Heart left ventricle (tissue), 16 donors: ENCODE measurements at regions of chr6 and their contacts with region 1.

Region 1: GRCh38 chr6:89080542-89081422 is at the start of gene PNRC1:
- DNase-seq: peak; percentile 100
- ATAC-seq: peak; percentile 88 to 92 (median 92)
- H3K4me3 ChIP-seq: peak within 1 kb of the TSS; percentile 68 to 100 (median 95)
- H3K27ac ChIP-seq: peak within 1 kb of the TSS; percentile 95 to 100 (median 100)
- H3K4me1 ChIP-seq: peaks cover 0 to 48% (median 29%) of the 10 kb centered on the region in 12 donors
- H3K27me3 ChIP-seq: no peaks in the 10 kb centered on the region
- CTCF ChIP-seq: peak in 1 of 12 donors; percentile 8
- POLR2A ChIP-seq: peak; percentile 95 to 100
- total RNA-seq, gene PNRC1: 141 to 280 (median 213) TPM

Region 2: DNA sequence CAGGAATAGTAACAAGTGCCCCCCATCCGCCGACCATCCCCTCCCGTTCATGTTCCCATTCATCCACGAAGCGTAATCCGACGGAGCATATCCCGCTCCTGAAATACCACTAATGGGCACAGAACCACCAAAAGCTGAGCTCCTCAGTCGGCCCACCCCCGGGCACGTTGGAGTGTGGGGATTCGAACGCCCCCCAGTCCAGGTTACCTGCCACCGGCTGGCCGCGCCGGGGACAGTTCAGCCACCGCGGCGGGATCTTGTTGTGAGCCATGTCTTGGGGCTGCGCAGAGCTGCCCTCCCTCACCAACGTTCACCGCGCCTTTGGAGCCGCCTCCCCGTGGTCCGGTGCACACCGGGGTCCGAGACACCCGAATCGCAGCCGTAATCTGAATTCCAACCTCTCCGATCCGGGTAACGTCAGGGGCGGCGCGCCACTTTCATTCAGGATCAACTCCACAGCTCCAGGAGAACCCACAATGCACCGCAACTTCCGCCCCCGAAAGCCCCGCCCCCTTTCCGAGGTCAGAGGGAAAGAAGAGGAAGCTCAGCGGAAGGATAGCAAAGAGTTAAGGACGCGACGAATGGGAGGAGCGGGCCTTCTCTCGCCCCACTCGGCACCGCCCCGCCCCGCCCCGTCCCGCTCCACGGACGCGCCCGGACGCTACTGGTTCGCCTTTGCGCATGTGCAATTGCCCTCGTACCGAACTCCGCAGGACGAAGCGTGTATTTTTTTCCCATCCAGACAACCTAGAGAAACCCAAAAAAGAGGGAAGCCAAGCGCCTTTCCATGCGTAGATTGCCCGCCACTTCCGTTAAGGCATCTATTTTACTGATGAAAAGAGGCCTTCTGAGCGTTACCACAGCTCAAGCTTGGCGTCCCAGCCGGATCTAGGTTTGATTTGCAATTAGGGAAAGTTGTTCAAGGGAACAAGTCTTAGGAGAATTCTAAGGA is 117.4 kb before region 1 on chr6 and contains the start of gene RNGTT:
- intact Hi-C with region 1: loop called in 1 of 10 experiments (anchors 1 kb)
- DNase-seq: peak; percentile 99
- ATAC-seq: peak; percentile 100
- H3K4me3 ChIP-seq: peak within 1 kb of the TSS; percentile 67 to 99 (median 96)
- H3K27ac ChIP-seq: peak within 1 kb of the TSS in 11 of 12 donors; percentile 67 to 92 (median 87)
- H3K4me1 ChIP-seq: peaks cover 0 to 23% (median 16%) of the 10 kb centered on the region in 12 donors
- H3K27me3 ChIP-seq: no peaks in the 10 kb centered on the region
- CTCF ChIP-seq: peak in 2 of 12 donors; percentile 9 to 16
- POLR2A ChIP-seq: peak in 1 of 2 donors; percentile 69
- total RNA-seq, gene RNGTT: 5.7 to 11.6 (median 9.1) TPM

Region 3: GRCh38 chr6:88989215-88989614 is 91.6 kb before region 1 on chr6:
- intact Hi-C with region 1: loop called in 8 of 10 experiments (anchors 2 to 5 kb)
- DNase-seq: no peak
- ATAC-seq: no peak
- H3K4me3 ChIP-seq: no peak overlapping the region
- H3K27ac ChIP-seq: no peak overlapping the region
- H3K4me1 ChIP-seq: peaks cover 0 to 8% (median 0%) of the 10 kb centered on the region in 12 donors
- H3K27me3 ChIP-seq: no peaks in the 10 kb centered on the region
- CTCF ChIP-seq: no peak
- POLR2A ChIP-seq: no peak

Region 4: DNA sequence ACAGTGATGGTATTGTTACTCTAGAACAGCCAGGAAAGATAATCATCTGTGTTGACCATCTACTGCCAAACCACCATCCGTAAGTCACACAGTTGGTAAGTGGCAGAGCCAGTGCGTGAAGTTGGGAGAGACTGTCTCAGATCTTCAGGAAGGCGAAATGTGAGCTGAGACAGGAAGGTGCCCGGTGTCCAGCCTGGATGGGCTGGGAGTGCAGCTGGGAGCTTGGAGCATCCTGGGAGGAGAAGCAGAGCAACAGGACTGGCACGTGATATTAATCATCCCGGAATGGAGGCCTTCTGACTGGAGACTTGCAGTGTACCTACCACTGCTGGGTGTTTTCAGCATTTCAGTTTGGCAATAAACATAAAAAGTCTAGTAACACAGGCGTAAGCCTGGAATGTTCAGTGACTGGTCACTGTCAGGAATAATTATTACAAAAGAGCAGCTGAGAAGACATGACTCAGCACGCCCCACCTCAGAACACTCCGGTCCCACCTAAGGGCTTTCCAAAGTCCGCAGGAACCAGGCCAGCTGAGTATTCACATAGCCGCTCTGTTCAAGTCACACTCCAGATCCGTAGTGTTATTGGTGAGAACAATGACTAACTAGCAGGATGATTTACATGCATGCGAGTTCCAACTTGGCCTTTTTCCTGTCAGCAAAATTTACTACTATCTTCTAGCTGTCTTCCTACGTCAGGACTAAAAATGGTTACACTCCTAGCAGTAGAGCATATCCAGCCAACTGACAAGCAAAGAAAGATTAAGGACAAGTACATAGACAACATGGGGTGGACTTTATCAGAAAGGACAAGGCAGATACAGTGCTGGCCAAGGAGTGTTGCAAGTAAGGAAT is 45.3 kb before region 1 on chr6:
- intact Hi-C with region 1: loop called (anchors 1 to 5 kb)
- DNase-seq: peak; percentile 66 to 95 (median 71)
- ATAC-seq: peak; percentile 92 to 96 (median 94)
- H3K4me3 ChIP-seq: peak overlapping the region in 10 of 12 donors; percentile 0 to 29 (median 14)
- H3K27ac ChIP-seq: peak overlapping the region; percentile 62 to 97 (median 82)
- H3K4me1 ChIP-seq: peaks cover 4 to 54% (median 25%) of the 10 kb centered on the region in 12 donors
- H3K27me3 ChIP-seq: no peaks in the 10 kb centered on the region
- CTCF ChIP-seq: no peak
- POLR2A ChIP-seq: no peak

Region 5: DNA sequence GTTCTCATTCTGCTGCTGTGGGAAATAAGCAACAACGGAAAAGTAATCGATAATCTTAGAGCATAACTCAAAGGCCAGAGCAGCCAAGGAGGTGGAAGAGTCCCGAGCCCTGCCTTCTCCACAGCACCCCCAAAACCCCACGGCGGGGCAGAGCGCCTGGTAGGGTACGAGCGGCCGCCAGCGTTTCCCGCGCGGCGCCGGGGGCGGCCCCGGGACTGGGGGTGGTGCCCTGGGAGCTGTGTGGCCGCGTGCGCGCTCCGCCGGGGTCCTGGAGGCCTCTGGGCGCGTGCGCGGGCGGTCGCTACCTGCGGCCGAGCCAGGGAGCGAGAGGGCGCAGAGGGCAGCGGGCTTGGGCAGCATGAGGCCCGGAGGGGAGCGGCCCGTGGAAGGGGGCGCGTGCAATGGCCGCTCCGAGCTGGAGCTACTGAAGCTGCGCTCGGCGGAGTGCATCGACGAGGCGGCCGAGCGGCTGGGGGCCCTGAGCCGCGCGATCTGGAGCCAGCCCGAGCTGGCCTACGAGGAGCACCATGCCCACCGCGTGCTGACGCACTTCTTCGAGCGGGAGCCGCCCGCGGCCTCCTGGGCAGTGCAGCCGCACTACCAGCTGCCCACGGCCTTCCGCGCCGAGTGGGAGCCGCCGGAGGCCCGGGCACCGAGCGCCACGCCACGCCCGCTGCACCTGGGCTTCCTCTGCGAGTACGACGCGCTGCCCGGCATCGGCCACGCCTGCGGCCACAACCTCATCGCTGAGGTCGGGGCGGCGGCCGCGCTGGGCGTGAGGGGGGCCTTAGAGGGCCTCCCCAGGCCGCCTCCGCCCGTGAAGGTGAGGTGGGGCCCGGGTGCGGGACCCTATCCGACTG is 65.2 kb after region 1 on chr6 and contains the start of gene PM20D2:
- intact Hi-C with region 1: loop called in 5 of 10 experiments (anchors 5 to 10 kb)
- DNase-seq: peak; percentile 70 to 77 (median 74)
- ATAC-seq: peak; percentile 92 to 98 (median 95)
- H3K4me3 ChIP-seq: peak within 1 kb of the TSS; percentile 61 to 92 (median 85)
- H3K27ac ChIP-seq: peak within 1 kb of the TSS; percentile 82 to 98 (median 90)
- H3K4me1 ChIP-seq: peaks cover 0 to 25% (median 7%) of the 10 kb centered on the region in 12 donors
- H3K27me3 ChIP-seq: no peaks in the 10 kb centered on the region
- CTCF ChIP-seq: no peak
- POLR2A ChIP-seq: peak; percentile 2 to 64
- total RNA-seq, gene PM20D2: 6.0 to 22.9 (median 10.4) TPM

Region 6: DNA sequence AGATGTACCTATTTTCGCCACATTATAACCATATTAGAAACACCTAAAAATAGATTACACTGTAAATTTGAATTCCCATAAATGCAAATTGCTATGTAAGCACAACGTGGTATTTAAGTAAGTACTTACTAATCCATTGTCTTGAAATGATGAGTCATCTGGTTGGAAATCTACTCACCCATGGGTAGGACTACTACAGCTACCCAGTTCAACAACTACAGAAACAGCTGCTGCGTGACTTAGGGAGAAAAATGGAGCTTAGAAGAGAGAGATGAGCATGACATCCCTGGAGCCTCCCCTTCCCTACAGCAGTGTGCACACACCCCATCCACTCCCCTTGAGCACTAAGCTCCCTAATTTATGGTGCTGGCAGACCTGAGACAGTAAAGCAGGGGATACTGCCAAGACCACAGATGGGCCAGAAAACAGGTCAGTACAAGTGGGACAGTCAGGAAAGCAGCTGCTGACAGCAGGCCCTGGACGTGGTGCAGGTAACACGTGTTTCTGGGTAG is 304.4 kb after region 1 on chr6:
- intact Hi-C with region 1: no loop called
- DNase-seq: no peak
- ATAC-seq: peak; percentile 17 to 65 (median 59)
- H3K4me3 ChIP-seq: no peak overlapping the region
- H3K27ac ChIP-seq: peak overlapping the region in 1 of 12 donors; percentile 4
- H3K4me1 ChIP-seq: peaks cover 0 to 14% (median 0%) of the 10 kb centered on the region in 12 donors
- H3K27me3 ChIP-seq: no peaks in the 10 kb centered on the region
- CTCF ChIP-seq: no peak
- POLR2A ChIP-seq: no peak

Region 7: DNA sequence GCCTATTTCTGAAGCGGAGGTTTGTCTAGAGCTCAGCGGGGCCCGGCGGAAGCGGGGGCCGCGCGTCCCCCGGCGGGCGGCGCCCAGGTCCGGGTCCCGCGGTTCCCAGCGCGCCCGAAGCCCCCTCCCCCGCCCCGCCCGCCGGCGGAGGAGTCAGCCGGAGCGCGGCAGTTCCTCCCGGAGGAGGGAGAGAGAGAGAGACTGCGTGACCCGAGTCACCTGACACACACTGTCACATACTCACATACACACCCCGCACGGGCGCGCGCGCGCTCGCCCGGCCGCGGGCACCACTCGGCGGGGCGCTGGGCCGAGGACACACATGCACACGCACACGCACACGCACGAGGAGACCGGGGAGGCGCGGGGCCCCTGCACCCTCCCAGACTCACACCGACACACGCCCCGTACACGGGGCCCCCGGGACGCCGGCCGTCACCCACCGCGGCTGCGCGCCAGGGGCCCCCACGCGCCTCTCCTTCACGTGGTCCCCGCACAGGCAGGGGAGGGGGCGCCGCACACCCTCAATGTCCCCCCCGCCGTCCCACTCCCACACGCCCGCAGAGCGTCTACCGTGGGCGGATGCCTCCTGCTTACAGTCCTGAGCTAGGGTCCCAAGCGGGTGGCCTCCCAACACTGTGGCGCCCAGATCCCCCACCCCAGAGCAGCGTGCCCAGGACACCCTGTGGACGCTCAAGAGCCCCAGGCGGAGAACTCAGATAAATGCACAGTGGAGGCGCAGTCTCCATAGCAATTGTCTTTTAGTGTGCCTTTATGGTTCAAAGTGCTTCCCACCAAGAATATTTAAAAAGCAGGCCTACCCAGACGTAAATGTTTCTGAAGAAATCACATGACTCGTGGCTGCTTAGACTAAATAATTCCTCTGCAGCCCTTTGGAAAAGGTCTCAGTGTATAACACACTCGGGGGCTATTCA is 331.6 kb after region 1 on chr6 and contains the start of gene RRAGD:
- intact Hi-C with region 1: loop called in 1 of 10 experiments (anchors 5 kb)
- DNase-seq: peak; percentile 75 to 84 (median 82)
- ATAC-seq: peak; percentile 72 to 94 (median 88)
- H3K4me3 ChIP-seq: peak within 1 kb of the TSS; percentile 69 to 96 (median 84)
- H3K27ac ChIP-seq: peak within 1 kb of the TSS; percentile 79 to 94 (median 91)
- H3K4me1 ChIP-seq: peaks cover 0 to 45% (median 16%) of the 10 kb centered on the region in 12 donors
- H3K27me3 ChIP-seq: no peaks in the 10 kb centered on the region
- CTCF ChIP-seq: peak in 1 of 12 donors; percentile 11
- POLR2A ChIP-seq: peak in 1 of 2 donors; percentile 42
- total RNA-seq, gene RRAGD: 69.7 to 147 (median 102) TPM